K562 (cell line): ENCODE measurements at regions of chr10 and their contacts with region 1.

Region 1: GRCh38 chr10:64798297-64798696 is 1277.1 kb downstream of the REEP3 start:
- DNase-seq: no peak
- ATAC-seq: no peak
- H3K4me3 ChIP-seq: no peak overlapping the region
- H3K27ac ChIP-seq: no peak overlapping the region
- H3K4me1 ChIP-seq: no peaks in the 10 kb centered on the region
- H3K27me3 ChIP-seq: no peaks in the 10 kb centered on the region
- CTCF ChIP-seq: no peak
- EP300 ChIP-seq: no peak
- POLR2A ChIP-seq: no peak
- RAD21 ChIP-seq: no peak

Region 2: GRCh38 chr10:64773357-64773756 is 24.9 kb before region 1 on chr10:
- CTCF ChIA-PET with region 1: no interaction called
- POLR2A ChIA-PET with region 1: no interaction called
- in situ Hi-C with region 1: no loop called
- intact Hi-C with region 1: no loop called
- DNase-seq: no peak
- ATAC-seq: no peak
- H3K4me3 ChIP-seq: no peak overlapping the region
- H3K27ac ChIP-seq: no peak overlapping the region
- H3K4me1 ChIP-seq: no peaks in the 10 kb centered on the region
- H3K27me3 ChIP-seq: no peaks in the 10 kb centered on the region
- CTCF ChIP-seq: no peak
- EP300 ChIP-seq: no peak
- POLR2A ChIP-seq: no peak
- RAD21 ChIP-seq: no peak

Region 3: GRCh38 chr10:64859911-64860310 is 61.6 kb after region 1 on chr10:
- CTCF ChIA-PET with region 1: no interaction called
- POLR2A ChIA-PET with region 1: no interaction called
- in situ Hi-C with region 1: no loop called
- intact Hi-C with region 1: loop called (anchors 10 kb)
- DNase-seq: no peak
- ATAC-seq: no peak
- H3K4me3 ChIP-seq: no peak overlapping the region
- H3K27ac ChIP-seq: no peak overlapping the region
- H3K4me1 ChIP-seq: no peaks in the 10 kb centered on the region
- H3K27me3 ChIP-seq: no peaks in the 10 kb centered on the region
- CTCF ChIP-seq: no peak
- EP300 ChIP-seq: no peak
- POLR2A ChIP-seq: no peak
- RAD21 ChIP-seq: no peak